WTC11 (cell line): ENCODE measurements at regions of chr22 and their contacts with region 1.

Region 1: GRCh38 chr22:36409911-36410756 is 22.4 kb upstream of the MYH9 start:
- DNase-seq: peak; percentile 99
- ATAC-seq: peak; percentile 97
- H3K4me3 Mint-ChIP-seq: peak overlapping the region; percentile 88
- H3K27ac Mint-ChIP-seq: peak overlapping the region; percentile 97
- H3K4me1 Mint-ChIP-seq: peaks cover 16% of the 10 kb centered on the region
- H3K27me3 Mint-ChIP-seq: no peaks in the 10 kb centered on the region
- CTCF ChIP-seq: no peak

Region 2: GRCh38 chr22:36331306-36331911 is 78.7 kb before region 1 on chr22:
- CTCF ChIA-PET with region 1: interaction called, 6 read pairs
- POLR2A ChIA-PET with region 1: interaction called, 14 read pairs
- DNase-seq: peak; percentile 54
- ATAC-seq: peak; percentile 32
- H3K4me3 Mint-ChIP-seq: no peak overlapping the region
- H3K27ac Mint-ChIP-seq: peak overlapping the region; percentile 100
- H3K4me1 Mint-ChIP-seq: peaks cover 81% of the 10 kb centered on the region
- H3K27me3 Mint-ChIP-seq: no peaks in the 10 kb centered on the region
- CTCF ChIP-seq: no peak

Region 3: GRCh38 chr22:36387752-36388518 is 22.2 kb before region 1 on chr22 and contains the start of gene MYH9:
- CTCF ChIA-PET with region 1: interaction called, 4 read pairs
- POLR2A ChIA-PET with region 1: interaction called, 32 read pairs
- DNase-seq: peak; percentile 100
- ATAC-seq: peak; percentile 93
- H3K4me3 Mint-ChIP-seq: peak within 1 kb of the TSS; percentile 87
- H3K27ac Mint-ChIP-seq: peak within 1 kb of the TSS; percentile 95
- H3K4me1 Mint-ChIP-seq: peaks cover 40% of the 10 kb centered on the region
- H3K27me3 Mint-ChIP-seq: no peaks in the 10 kb centered on the region
- CTCF ChIP-seq: no peak
- total RNA-seq, gene MYH9: 272 to 288 TPM (median 277 TPM) in 3 replicates

Region 4: DNA sequence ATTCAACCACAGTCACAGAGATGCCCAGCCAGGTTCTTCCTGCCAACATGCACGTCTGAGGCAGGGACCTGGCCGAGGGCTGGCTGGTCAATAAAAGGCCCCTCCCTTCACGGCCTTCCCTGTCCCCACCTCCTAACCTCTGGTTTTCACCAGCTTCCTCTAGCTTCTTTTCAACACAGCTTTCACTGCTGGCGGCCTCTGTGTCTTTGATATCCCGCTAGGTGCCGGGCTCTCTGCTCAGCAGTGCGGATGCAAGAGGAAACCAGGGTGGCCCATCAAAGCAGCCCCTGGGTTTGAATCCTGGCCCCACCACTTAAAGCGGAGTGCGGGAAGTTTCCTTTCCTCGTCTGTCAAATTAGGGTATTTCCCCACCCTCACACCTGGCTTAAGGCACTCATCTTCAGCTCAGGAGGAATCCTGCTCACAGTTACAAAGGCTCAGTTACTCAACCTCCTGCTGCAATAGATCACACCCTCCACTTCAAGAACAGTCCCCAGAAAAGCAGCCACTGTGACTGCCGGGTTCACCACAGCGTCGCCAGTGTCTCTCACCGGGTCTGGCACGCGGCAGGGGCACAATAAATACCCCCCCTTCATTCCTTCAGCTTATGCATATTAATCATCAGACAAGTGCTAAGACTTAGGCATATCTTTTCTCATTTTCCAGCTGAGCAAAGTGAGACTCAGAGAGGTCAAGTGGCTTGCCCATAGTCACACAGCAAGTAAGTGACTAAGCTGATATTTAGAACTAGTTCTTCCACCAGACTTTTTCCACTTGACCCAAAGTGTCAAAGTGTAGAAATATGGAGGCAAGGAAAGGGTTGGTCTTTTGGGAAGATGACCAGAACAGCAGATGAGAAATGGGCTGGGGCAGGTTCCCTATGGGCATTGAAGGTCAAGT is 25.6 kb after region 1 on chr22:
- CTCF ChIA-PET with region 1: interaction called, 4 read pairs
- POLR2A ChIA-PET with region 1: interaction called, 13 read pairs
- DNase-seq: peak; percentile 58
- ATAC-seq: peak; percentile 78
- H3K4me3 Mint-ChIP-seq: 0 out of 2 replicates have a peak overlapping the region, but pooled peaks have one; percentile 5
- H3K27ac Mint-ChIP-seq: peak overlapping the region; percentile 80
- H3K4me1 Mint-ChIP-seq: peaks cover 43% of the 10 kb centered on the region
- H3K27me3 Mint-ChIP-seq: no peaks in the 10 kb centered on the region
- CTCF ChIP-seq: no peak

Region 5: GRCh38 chr22:36461669-36462649 is 51.8 kb after region 1 on chr22:
- CTCF ChIA-PET with region 1: no interaction called
- POLR2A ChIA-PET with region 1: interaction called, 17 read pairs
- DNase-seq: no peak
- ATAC-seq: peak; percentile 55
- H3K4me3 Mint-ChIP-seq: no peak overlapping the region
- H3K27ac Mint-ChIP-seq: peak overlapping the region; percentile 85
- H3K4me1 Mint-ChIP-seq: peaks cover 37% of the 10 kb centered on the region
- H3K27me3 Mint-ChIP-seq: peaks cover 6% of the 10 kb centered on the region
- CTCF ChIP-seq: no peak

Region 6: GRCh38 chr22:36470162-36470993 is 60.2 kb after region 1 on chr22:
- CTCF ChIA-PET with region 1: interaction called, 11 read pairs
- POLR2A ChIA-PET with region 1: interaction called, 7 read pairs
- DNase-seq: peak; percentile 86
- ATAC-seq: peak; percentile 95
- H3K4me3 Mint-ChIP-seq: no peak overlapping the region
- H3K27ac Mint-ChIP-seq: peak overlapping the region; percentile 87
- H3K4me1 Mint-ChIP-seq: 0 out of 2 replicates have a peak, but pooled peaks cover 3% of the 10 kb centered on the region
- H3K27me3 Mint-ChIP-seq: no peaks in the 10 kb centered on the region
- CTCF ChIP-seq: peak; percentile 93

Region 7: DNA sequence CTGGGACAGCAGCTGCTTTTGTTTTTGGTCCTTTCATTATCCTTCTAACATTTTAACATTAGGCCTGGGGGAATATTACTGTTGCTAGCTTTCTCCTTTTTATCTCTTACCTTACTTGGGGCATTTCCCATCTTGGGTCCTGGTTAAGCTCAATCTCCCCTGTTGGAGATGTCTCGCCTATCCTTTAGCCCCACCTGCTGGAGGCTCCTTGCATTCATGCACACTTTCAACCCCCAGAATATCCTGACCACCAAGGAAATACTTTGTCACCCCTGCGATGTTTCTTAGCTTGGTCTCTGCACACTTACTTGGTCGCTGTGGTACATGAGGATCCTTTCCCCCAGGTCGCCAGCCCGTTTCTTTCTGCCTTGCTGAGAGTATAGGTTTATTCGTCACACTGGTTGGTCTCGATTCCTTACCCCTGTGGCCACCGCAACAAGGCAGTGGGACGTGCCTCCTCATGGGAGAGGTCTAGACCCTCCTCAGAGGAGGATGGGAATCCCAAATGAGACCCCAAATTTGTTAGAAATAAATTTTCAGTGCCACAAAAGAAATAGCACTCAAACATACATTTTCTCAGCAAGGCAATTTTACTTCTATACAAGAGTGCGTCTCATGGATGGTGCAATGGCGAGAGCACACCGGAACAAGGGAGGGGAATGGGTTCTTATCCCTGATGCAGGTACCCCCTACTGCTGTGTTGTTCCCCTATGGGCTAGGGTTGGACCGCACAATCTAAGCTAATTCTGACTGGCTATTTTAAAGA is 76.7 kb after region 1 on chr22:
- CTCF ChIA-PET with region 1: interaction called, 10 read pairs
- POLR2A ChIA-PET with region 1: no interaction called
- DNase-seq: peak; percentile 77
- ATAC-seq: peak; percentile 57
- H3K4me3 Mint-ChIP-seq: no peak overlapping the region; the same call in 1 of the 2 replicates
- H3K27ac Mint-ChIP-seq: no peak overlapping the region
- H3K4me1 Mint-ChIP-seq: no peaks in the 10 kb centered on the region
- H3K27me3 Mint-ChIP-seq: peaks cover 41% of the 10 kb centered on the region
- CTCF ChIP-seq: peak; percentile 42; the same call in 1 of the 2 replicates